ENCODE measurements at regions of chrX and their contacts with region 1.

Region 1: DNA sequence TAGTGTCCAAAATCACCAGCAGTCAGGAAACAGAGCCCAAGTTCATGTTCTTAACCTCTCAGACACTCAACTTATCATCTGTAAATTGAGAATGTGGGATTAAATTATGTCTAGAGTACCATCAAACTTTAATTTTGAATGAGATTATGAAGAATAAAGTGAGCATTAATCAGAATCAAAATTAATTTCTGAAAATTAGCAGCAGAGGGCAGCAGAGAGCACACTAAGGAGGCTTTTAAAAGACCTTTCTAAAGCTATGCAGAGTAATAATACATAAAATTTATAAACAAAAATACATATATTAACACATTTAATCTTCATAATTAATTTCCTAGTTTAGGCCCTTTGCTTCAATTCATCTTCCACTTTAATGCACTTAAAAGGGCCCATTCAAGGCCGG is 7.1 kb downstream of the TASL start:
- DNase-seq: no peak

Region 2: DNA sequence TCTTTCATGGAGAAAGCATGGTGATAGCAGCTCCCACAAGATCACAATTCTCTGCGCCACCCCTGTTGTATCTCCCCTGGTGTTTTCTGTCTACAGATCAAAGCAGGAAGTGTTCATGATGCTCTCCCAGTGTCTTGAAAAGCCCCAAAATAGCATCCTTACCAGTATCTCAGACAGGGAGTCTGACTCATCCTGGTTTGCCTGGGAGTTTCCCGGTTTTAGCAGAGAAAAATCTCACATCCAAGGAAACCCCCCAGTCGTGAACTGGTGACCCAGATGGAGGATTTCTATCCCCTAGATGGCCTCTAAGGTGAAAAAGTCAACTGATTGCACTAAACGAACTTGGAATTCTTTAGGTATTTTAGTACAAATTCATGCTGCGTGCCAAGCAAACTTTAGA is 197.0 kb before region 1 on chrX:
- intact Hi-C with region 1: no loop called
- DNase-seq: no peak

Region 3: GRCh38 chrX:30713061-30713525 is 142.6 kb after region 1 on chrX:
- intact Hi-C with region 1: loop called (anchors 5 kb)
- DNase-seq: no peak

Region 4: DNA sequence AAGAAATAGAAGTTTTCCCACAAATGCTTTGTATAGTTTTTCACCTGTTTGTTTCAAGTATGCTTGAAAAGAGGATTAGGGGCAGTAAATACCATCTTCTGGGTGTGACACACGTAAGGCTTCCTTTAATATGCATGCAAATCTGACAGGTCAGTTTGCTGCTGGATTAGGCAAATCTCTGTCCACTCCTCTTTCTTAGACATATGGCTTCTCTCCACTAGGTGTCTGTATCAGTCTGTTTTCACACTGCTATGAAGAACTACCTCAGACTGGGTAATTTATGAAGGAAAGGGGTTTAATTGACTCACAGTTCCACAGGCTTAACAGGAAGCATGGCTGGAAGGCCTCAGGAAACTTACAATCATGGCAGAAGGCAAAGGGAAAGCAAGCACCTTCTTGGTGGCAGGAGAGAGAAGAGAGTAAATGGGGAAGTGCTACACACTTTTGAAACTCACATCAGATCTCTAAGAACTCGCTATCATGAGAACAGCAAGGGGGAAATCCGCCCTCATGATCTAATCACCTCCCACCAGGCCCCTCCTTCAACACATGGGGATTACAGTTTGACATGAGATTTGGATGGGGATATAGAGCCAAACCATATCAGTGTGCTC is 251.7 kb after region 1 on chrX:
- intact Hi-C with region 1: no loop called
- DNase-seq: no peak